ENCODE measurements at regions of chr1 and their contacts with region 1.

Region 1: GRCh38 chr1:230149751-230150584 is 82.9 kb downstream of the GALNT2 start:
- DNase-seq: no peak
- ATAC-seq: peak; percentile 81
- H3K4me3 Mint-ChIP-seq: peak overlapping the region; percentile 80
- H3K27ac Mint-ChIP-seq: peak overlapping the region; percentile 94
- H3K4me1 Mint-ChIP-seq: peaks cover 71% of the 10 kb centered on the region
- H3K27me3 Mint-ChIP-seq: no peaks in the 10 kb centered on the region
- CTCF ChIP-seq: no peak

Region 2: GRCh38 chr1:230109895-230110667 is 39.9 kb before region 1 on chr1:
- CTCF ChIA-PET with region 1: interaction called, 7 read pairs
- POLR2A ChIA-PET with region 1: interaction called, 22 read pairs
- intact Hi-C with region 1: loop called (anchors 1 kb)
- DNase-seq: peak; percentile 56
- ATAC-seq: peak; percentile 87
- H3K4me3 Mint-ChIP-seq: peak overlapping the region; percentile 68
- H3K27ac Mint-ChIP-seq: peak overlapping the region; percentile 88
- H3K4me1 Mint-ChIP-seq: peaks cover 93% of the 10 kb centered on the region
- H3K27me3 Mint-ChIP-seq: no peaks in the 10 kb centered on the region
- CTCF ChIP-seq: no peak

Region 3: DNA sequence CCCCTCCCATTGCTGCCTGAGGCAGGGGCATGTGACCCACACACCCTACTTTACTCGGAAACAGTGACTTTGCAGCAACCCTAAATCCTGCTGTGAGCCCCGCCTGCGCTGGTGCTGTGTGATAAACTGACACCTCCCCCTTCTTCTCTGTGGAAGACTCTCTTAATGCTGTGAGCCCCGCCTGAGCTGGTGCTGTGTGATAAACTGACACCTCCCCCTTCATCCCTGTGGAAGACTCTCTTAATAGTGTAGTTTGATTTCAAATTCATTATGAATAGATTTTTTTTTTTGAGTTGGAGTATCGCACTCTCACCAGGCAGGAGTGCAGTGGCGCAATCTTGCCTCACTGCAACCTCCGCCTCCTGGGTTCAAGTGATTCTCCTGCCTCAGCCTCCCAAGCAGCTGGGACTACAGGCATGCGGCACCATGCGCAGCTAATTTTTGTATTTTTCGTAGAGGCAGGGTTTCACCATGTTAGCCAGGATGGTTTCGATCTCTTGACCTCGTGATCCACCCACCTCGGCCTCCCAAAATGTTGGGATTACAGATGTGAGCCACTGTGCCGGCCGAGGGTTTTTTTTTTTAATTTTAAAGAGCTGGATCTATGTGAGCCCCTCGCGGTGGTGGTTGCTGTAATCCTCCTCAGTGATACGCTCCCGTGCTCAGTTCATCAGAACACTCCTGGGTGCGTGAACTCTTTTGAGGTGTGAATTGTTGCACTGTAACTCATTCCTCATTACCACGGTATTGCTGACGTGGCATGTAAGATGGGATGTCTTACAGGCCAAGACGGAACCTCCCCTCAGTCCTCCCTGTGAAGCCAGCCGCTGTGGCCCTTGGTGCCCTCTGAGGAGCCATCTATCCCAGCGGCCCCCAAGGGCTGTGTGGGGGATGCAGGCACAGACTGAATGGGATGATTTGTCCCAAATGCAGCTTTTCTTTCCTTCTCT is 22.6 kb before region 1 on chr1:
- CTCF ChIA-PET with region 1: interaction called, 4 read pairs
- POLR2A ChIA-PET with region 1: interaction called, 132 read pairs
- intact Hi-C with region 1: loop called (anchors 1 kb)
- DNase-seq: no peak
- ATAC-seq: peak; percentile 11
- H3K4me3 Mint-ChIP-seq: peak overlapping the region; percentile 69
- H3K27ac Mint-ChIP-seq: peak overlapping the region; percentile 90
- H3K4me1 Mint-ChIP-seq: peaks cover 89% of the 10 kb centered on the region
- H3K27me3 Mint-ChIP-seq: no peaks in the 10 kb centered on the region
- CTCF ChIP-seq: no peak